ENCODE measurements at regions of chr15 and their contacts with region 1.

Region 1: GRCh38 chr15:40694688-40695468 is at the start of gene RAD51:
- DNase-seq: peak; percentile 95
- H3K4me3 ChIP-seq: peak within 1 kb of the TSS; percentile 66 to 97 (median 75)
- H3K27ac ChIP-seq: peak within 1 kb of the TSS; percentile 91
- H3K4me1 ChIP-seq: peaks cover 8% of the 10 kb centered on the region
- H3K27me3 ChIP-seq: no peaks in the 10 kb centered on the region
- CTCF ChIP-seq: no peak
- total RNA-seq, gene RAD51: 1.5 to 22.6 TPM

Region 2: GRCh38 chr15:40593588-40594428 is 101.1 kb before region 1 on chr15 and contains the start of gene KNL1:
- CTCF ChIA-PET with region 1: interaction called, 3 read pairs
- dilution Hi-C with region 1: no loop called
- in situ Hi-C with region 1: no loop called
- intact Hi-C with region 1: loop called (anchors 1 kb)
- DNase-seq: peak; percentile 93
- H3K4me3 ChIP-seq: peak within 1 kb of the TSS; percentile 70 to 80 (median 76)
- H3K27ac ChIP-seq: peak within 1 kb of the TSS; percentile 88
- H3K4me1 ChIP-seq: peaks cover 11% of the 10 kb centered on the region
- H3K27me3 ChIP-seq: no peaks in the 10 kb centered on the region
- CTCF ChIP-seq: no peak
- total RNA-seq, gene KNL1: 1.8 to 21.3 TPM

Region 3: GRCh38 chr15:40743921-40744814 is 49.3 kb after region 1 on chr15:
- CTCF ChIA-PET with region 1: no interaction called
- dilution Hi-C with region 1: no loop called
- in situ Hi-C with region 1: no loop called
- intact Hi-C with region 1: loop called (anchors 5 kb)
- DNase-seq: peak; percentile 78
- H3K4me3 ChIP-seq: no peak overlapping the region
- H3K27ac ChIP-seq: no peak overlapping the region
- H3K4me1 ChIP-seq: peaks cover 10% of the 10 kb centered on the region
- H3K27me3 ChIP-seq: no peaks in the 10 kb centered on the region
- CTCF ChIP-seq: no peak

Measured in mammary epithelial cell (primary cell).